ENCODE measurements at regions of chr12 and their contacts with region 1.

Region 1: GRCh38 chr12:6039894-6040568 is 84.4 kb downstream of the VWF start:
- DNase-seq: peak; percentile 22
- ATAC-seq: peak; percentile 83
- H3K4me3 Mint-ChIP-seq: peak overlapping the region; percentile 36
- H3K27ac Mint-ChIP-seq: no peak overlapping the region
- H3K4me1 Mint-ChIP-seq: no peaks in the 10 kb centered on the region
- H3K27me3 Mint-ChIP-seq: peaks cover 6% of the 10 kb centered on the region
- CTCF ChIP-seq: no peak

Region 2: DNA sequence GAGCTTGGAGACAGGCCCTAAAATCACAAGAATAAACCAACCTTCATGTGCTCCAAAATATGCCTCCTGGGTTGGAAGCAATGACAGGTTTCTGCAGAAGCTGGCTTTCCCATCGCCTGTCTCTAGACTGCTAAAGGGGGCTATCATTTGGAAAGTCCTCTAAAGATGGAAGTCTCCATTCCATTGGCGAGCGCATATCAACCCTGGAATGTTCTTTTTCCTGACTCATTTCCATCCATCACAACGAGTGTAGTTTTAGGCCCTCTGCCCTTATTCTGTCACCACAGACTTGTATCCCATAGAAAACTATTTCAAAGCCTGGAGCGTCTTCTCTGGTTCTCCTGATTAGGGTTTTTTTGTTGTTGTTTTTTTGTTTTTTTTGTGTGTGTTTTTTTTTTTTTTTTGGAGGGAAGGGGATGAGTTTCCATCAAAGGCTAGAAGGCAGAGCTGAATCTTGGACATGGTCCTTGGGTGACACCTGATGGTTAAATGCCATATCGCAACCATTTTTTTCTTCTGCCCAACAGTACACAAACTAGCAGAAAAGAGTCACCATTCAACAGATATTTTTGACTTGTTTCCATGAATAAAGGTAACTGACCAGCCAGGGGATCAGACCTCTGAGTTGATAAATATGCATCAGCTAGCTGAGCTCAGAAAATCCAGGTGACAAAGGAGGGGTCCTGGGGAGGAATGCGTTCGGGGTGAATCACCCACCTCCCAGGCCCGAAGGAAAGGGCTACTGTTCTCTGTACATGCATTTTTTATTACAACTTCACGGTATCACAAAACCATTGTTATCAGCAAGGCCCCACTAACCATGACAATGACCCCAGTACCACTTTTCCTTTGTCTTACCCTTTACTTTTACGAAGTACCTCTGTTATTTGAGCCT is 955.8 kb before region 1 on chr12:
- CTCF ChIA-PET with region 1: no interaction called
- POLR2A ChIA-PET with region 1: no interaction called
- intact Hi-C with region 1: loop called (anchors 10 kb)
- DNase-seq: no peak
- ATAC-seq: peak; percentile 57
- H3K4me3 Mint-ChIP-seq: no peak overlapping the region
- H3K27ac Mint-ChIP-seq: no peak overlapping the region
- H3K4me1 Mint-ChIP-seq: no peaks in the 10 kb centered on the region
- H3K27me3 Mint-ChIP-seq: no peaks in the 10 kb centered on the region
- CTCF ChIP-seq: no peak

Region 3: DNA sequence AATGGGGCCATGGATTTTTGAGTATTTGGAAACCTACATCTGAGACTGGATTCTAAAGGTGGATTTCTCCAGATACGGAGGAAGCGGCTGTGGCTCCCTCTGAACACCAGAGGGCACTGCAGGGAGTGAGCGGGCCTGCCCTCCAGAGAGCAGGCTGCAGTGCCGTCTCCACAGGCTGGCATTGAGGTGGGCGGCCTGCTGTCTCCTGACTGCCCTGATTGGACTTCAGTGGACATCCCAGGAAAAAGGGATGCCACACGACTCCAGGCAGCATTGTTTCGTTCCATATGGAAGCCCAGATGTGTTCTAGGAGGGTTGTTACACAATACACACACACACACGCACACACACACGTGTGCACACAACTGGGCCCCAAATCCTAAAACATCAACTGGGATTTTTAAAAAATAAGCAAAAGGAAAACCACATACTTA is 74.1 kb before region 1 on chr12:
- CTCF ChIA-PET with region 1: interaction called, 3 read pairs
- POLR2A ChIA-PET with region 1: no interaction called
- intact Hi-C with region 1: loop called (anchors 1 kb)
- DNase-seq: no peak
- ATAC-seq: no peak
- H3K4me3 Mint-ChIP-seq: no peak overlapping the region
- H3K27ac Mint-ChIP-seq: no peak overlapping the region
- H3K4me1 Mint-ChIP-seq: no peaks in the 10 kb centered on the region
- H3K27me3 Mint-ChIP-seq: peaks cover 21% of the 10 kb centered on the region
- CTCF ChIP-seq: peak; percentile 37

Region 4: GRCh38 chr12:5988659-5989116 is 51.3 kb before region 1 on chr12:
- CTCF ChIA-PET with region 1: interaction called, 90 read pairs
- POLR2A ChIA-PET with region 1: no interaction called
- intact Hi-C with region 1: loop called (anchors 1 kb)
- DNase-seq: peak; percentile 60
- ATAC-seq: peak; percentile 91
- H3K4me3 Mint-ChIP-seq: no peak overlapping the region
- H3K27ac Mint-ChIP-seq: no peak overlapping the region
- H3K4me1 Mint-ChIP-seq: no peaks in the 10 kb centered on the region
- H3K27me3 Mint-ChIP-seq: peaks cover 2% of the 10 kb centered on the region
- CTCF ChIP-seq: peak; percentile 59

Measured in activated B cell treated with CpG ODN at 0.5 μM for 24 hours (primary cell).